ENCODE measurements at regions of chr2 and their contacts with region 1.

Region 1: GRCh38 chr2:160970052-160970965 is 189.9 kb upstream of the TANK start:
- DNase-seq: no peak
- ATAC-seq: peak; percentile 28 to 80 (median 52)
- H3K4me3 ChIP-seq: no peak overlapping the region
- H3K27ac ChIP-seq: no peak overlapping the region
- H3K4me1 ChIP-seq: no peaks in the 10 kb centered on the region
- H3K27me3 ChIP-seq: no peaks in the 10 kb centered on the region
- CTCF ChIP-seq: peak; percentile 70

Region 2: DNA sequence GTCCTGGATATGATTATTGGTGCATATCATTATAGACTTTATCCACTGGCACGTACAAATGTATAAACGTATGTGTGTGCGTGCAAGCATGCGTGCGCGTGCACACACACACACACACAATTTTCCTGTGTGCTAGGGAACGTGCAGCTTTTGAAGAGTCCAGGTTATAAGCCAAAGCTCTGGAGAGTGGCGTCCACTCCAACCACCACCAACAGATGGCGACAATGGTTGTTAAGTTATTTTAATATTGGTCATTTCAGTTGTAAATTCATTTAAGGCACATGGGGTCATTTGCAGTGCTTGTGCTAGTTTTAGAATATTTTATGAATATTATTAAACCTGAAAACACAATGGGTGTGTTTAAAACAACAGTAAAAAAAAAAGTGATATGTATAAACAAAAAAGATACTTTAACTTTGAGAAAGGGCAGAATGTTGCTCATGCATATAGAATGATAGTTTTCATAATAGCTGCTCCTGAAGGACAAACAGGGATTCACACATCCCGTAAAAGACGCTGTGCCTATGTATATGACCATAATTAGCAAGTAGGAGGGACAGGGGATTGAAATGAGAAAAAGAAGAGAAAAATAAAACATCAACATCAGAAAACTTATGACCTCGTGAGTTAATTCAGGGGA is 646.0 kb before region 1 on chr2:
- intact Hi-C with region 1: loop called in 1 of 2 experiments (anchors 10 kb)
- DNase-seq: peak; percentile 50 to 64
- ATAC-seq: peak; percentile 51 to 80 (median 70)
- H3K4me3 ChIP-seq: no peak overlapping the region
- H3K27ac ChIP-seq: peak overlapping the region; percentile 9
- H3K4me1 ChIP-seq: peaks cover 46% of the 10 kb centered on the region
- H3K27me3 ChIP-seq: no peaks in the 10 kb centered on the region
- CTCF ChIP-seq: peak; percentile 77

Region 3: GRCh38 chr2:160429248-160430000 is 540.9 kb before region 1 on chr2:
- intact Hi-C with region 1: loop called in 1 of 2 experiments (anchors 10 kb)
- DNase-seq: no peak
- ATAC-seq: peak in 3 of 4 donors; percentile 31 to 66 (median 35)
- H3K4me3 ChIP-seq: no peak overlapping the region
- H3K27ac ChIP-seq: peak overlapping the region; percentile 61
- H3K4me1 ChIP-seq: peaks cover 38% of the 10 kb centered on the region
- H3K27me3 ChIP-seq: no peaks in the 10 kb centered on the region
- CTCF ChIP-seq: peak; percentile 65

Region 4: GRCh38 chr2:161044095-161044865 is 74.0 kb after region 1 on chr2:
- intact Hi-C with region 1: no loop called
- DNase-seq: peak in 1 of 2 donors; percentile 67
- ATAC-seq: peak; percentile 34 to 81 (median 48)
- H3K4me3 ChIP-seq: peak overlapping the region; percentile 6
- H3K27ac ChIP-seq: peak overlapping the region; percentile 42
- H3K4me1 ChIP-seq: peaks cover 26% of the 10 kb centered on the region
- H3K27me3 ChIP-seq: no peaks in the 10 kb centered on the region
- CTCF ChIP-seq: no peak